Activated CD4-positive, alpha-beta T cell treated with anti-CD3 and anti-CD28 coated beads, Interleukin-2, amount 10 ng/mL, durations not matched to agents 24 days and 14 days (primary cell): ENCODE measurements at regions of chr20 and their contacts with region 1.

Region 1: DNA sequence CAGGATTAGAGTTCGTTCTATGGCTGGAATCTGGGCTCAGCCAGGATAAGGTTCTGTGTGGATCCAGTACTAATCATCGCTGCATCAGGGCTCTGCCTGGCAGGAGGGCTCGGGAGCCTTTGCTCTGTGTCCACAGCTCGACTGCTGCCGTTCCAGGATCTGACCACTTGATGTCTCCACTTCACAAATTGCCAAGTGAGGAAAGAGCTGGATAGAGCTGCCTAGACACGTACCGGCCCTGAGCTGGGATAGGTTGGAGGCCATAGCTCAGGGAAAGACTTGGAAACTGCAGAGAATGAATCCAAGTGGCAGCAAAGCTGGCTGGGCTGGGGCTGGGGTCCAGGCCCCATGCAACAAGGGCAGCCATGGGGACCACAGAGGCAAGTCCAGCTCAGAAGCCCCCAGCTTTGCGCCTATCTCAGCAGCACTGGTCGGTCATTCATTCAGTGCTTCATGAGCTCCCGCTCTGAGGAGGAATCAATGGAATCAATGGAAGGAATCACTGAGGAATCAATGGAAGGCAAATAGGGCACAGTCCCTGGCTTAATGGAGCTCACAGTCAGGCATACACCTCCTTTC is 38.0 kb upstream of the TOP1 start:
- DNase-seq: peak; percentile 91
- H3K4me3 Mint-ChIP-seq: peak overlapping the region; percentile 53
- H3K27ac Mint-ChIP-seq: peak overlapping the region; percentile 80
- H3K4me1 Mint-ChIP-seq: peaks cover 29% of the 10 kb centered on the region
- H3K27me3 Mint-ChIP-seq: no peaks in the 10 kb centered on the region

Region 2: GRCh38 chr20:41078329-41078728 is 87.7 kb after region 1 on chr20:
- intact Hi-C with region 1: loop called (anchors 5 kb)
- DNase-seq: no peak
- H3K4me3 Mint-ChIP-seq: peak overlapping the region; percentile 38
- H3K27ac Mint-ChIP-seq: peak overlapping the region; percentile 59
- H3K4me1 Mint-ChIP-seq: peaks cover 62% of the 10 kb centered on the region
- H3K27me3 Mint-ChIP-seq: no peaks in the 10 kb centered on the region

Region 3: DNA sequence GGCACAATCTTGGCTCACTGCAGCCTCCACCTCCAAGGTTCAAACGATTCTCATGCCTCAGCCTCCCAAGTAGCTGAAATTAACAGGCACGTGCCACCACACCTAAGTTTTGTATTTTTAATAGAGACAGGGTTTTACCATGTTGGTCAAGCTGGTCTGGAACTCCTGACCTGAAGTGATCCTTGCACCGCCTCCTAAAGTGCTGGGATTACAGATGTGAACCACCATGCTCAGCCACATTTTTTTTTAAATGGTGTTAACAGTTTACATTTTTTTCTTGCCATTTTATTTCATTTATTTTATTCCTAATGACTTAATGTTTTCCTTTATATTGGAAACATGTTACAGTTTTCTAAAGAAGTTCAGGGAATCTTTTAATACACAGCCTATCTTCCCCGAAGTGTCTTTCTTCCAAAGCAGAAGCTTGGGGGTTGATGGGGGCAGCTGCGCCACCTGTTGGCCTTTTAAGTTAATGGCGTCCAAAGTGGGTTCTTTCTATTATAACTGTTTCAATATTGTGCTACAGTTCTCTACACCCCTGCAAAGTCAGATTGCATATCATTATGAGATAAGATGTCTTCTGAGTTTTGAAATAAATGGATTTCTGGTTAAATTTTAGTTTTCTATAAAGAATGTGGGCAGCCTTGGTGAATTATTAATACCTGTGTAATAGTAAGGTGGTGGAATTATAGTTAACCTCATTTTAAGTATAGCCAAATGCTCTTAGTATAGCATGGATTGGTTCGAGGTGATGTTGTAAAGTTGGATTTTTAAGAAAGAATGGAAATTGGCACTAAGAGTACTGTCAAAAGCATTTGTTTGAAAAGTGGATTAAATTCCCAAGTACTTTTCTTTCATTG is 104.7 kb after region 1 on chr20:
- intact Hi-C with region 1: loop called (anchors 1 kb)
- DNase-seq: peak; percentile 85
- H3K4me3 Mint-ChIP-seq: no peak overlapping the region
- H3K27ac Mint-ChIP-seq: no peak overlapping the region
- H3K4me1 Mint-ChIP-seq: peaks cover 10% of the 10 kb centered on the region
- H3K27me3 Mint-ChIP-seq: no peaks in the 10 kb centered on the region